ENCODE measurements at regions of chr12 and their contacts with region 1.

Region 1: DNA sequence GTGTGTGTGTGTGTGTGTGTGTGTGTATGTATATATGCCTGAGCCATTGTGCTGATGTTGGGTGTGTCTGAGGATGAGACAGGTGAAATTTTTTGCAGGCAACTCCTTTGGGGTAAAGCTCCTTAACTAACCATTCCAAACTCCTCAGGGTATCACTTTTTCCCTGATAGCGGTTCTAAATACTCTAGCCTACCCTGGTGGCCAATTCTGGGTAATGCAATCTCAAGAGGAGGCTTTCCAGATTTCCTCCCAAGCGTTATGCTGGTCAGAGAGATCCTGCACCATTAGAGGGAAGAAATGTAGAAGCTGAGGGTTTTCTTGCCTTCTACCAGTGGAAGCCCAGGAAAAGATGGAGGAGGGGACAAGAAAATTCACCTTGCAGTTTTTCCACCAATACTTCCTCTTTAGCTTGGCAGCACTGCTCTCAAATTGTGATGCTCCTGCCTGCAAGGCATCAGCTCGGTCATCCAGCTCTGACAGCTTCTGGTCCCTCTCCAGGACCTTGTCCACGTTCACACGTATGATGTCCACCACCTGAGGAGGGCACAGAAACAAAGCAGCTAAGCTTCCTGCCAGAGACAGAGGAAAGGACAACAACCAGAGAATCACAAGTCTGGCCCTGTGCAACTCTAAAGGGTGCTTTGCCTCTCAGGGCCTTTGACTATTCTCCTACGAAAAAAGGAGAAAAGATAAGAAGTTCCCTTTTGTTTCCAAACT is 4.9 kb downstream of the VAMP1 start:
- DNase-seq: no peak
- ATAC-seq: peak in 1 of 2 donors; percentile 24

Region 2: DNA sequence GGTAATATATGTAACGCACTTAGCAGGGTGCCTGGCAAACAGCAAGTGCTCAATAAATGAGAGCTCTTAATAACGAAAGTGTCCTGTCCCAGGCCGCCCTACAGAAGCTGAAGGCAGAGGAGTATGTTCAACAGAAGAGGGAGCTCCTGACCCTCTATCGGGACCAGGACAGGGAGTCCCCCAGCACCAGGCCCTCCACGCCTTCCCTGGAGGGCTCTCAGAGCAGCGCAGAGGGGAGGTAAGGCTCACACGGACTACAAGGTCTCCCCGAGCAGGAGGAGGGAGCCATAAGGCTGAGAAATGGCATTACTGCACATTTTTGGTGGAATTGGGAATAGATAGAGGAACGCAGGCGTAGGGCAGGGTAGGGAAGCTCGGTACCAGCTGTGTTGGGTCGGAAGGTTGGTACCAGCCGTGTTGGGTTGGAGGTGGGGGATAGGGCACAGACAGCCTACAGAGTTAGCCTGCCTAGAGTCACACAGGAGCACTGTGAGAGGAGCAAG is 139.2 kb before region 1 on chr12:
- intact Hi-C with region 1: loop called in 1 of 2 experiments (anchors 5 kb)
- DNase-seq: peak; percentile 65
- ATAC-seq: peak; percentile 32 to 61

Region 3: DNA sequence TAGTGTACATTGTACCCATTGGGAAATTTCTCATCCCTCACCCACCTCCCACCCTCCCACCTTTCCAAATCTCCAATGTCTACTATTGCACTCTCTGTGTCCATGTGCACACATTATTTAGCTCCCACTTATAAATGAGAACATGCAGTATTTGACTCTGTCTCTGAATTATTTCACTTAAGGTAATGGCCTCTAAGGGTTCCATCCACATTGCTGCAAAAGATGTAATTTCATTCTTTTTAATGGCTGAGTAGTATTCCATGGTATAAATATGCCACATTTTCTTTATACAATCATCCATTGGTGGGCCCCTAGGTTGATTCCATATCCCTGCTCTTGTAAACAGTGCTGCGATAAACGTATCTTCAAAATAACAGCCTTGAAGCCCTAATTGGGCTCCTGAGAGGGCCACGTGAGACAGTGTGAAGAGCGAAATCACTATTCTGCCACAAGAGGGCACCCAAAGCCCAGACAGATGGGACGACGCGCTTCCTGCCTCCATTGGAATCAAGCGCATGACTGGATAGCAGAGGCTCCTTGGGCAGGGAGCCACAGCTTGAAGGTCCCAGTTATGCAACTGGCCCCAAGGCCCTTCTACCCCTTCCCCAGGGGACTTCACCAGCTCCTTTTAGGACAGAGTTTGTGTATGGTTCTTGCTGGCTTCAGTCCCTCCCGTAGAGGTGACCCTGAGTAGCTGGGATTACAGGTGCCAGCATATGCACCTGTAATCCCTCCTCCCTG is 42.2 kb before region 1 on chr12:
- intact Hi-C with region 1: loop called (anchors 2 to 5 kb)
- DNase-seq: peak; percentile 90
- ATAC-seq: peak; percentile 97 to 98